ENCODE measurements at regions of chr3 and their contacts with region 1.

Region 1: GRCh38 chr3:169668957-169669681 is 5.6 kb upstream of the MECOM start:
- DNase-seq: no peak
- H3K4me3 ChIP-seq: peak overlapping the region; percentile 55
- H3K27ac ChIP-seq: no peak overlapping the region
- H3K27me3 ChIP-seq: peaks cover 58% of the 10 kb centered on the region
- CTCF ChIP-seq: peak; percentile 74

Region 2: DNA sequence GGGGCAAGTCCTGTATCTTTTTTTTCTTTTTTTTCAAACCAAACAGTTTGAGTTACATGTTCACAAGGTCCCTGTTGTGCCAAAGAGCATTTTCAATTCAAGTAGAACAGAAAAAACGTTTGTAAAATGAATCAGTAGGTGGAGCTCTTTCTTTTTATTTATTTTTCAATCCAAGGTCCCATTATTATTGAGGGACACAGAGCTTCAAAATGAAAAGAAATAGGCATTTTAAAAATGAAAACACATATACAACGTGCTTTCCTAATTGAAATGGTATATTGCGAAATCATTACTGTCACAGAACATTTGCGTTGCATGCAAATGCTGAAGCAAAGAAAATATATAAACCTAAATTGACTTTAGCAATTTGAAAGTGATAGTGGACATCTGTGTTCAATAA is 716.6 kb before region 1 on chr3:
- CTCF ChIA-PET with region 1: interaction called, 19 read pairs
- POLR2A ChIA-PET with region 1: no interaction called
- DNase-seq: no peak
- H3K4me3 ChIP-seq: peak overlapping the region; percentile 1; the same call in 1 of the 2 replicates
- H3K27ac ChIP-seq: no peak overlapping the region
- H3K27me3 ChIP-seq: no peaks in the 10 kb centered on the region
- CTCF ChIP-seq: peak; percentile 35

Region 3: GRCh38 chr3:169133178-169134161 is 535.6 kb before region 1 on chr3:
- CTCF ChIA-PET with region 1: interaction called, 43 read pairs
- POLR2A ChIA-PET with region 1: no interaction called
- DNase-seq: no peak
- H3K4me3 ChIP-seq: no peak overlapping the region
- H3K27ac ChIP-seq: no peak overlapping the region
- H3K27me3 ChIP-seq: no peaks in the 10 kb centered on the region
- CTCF ChIP-seq: peak; percentile 54

Region 4: DNA sequence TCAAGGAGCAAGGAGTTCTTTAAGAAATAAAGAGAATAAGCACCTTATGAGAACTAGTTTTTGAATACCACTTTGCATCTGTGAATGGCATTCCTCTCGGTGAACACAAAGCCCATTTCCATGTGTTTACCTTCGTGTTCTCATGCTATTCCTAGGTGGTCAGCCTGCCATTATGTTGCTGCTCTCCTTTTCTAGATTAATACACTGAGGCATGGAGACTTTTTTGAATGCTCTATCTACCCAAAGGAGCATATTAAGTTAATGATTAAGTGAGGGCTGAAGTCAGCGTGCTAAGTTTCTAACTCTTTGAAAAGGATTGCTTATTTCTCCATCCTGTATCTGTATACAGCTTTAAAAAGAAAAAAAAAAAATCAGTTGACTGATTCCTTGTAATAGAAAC is 400.1 kb before region 1 on chr3:
- CTCF ChIA-PET with region 1: no interaction called
- POLR2A ChIA-PET with region 1: no interaction called
- DNase-seq: no peak
- H3K4me3 ChIP-seq: no peak overlapping the region
- H3K27ac ChIP-seq: no peak overlapping the region
- H3K27me3 ChIP-seq: no peaks in the 10 kb centered on the region
- CTCF ChIP-seq: no peak